Breast epithelium (tissue), 4 donors: ENCODE measurements at regions of chr16 and their contacts with region 1.

Region 1: DNA sequence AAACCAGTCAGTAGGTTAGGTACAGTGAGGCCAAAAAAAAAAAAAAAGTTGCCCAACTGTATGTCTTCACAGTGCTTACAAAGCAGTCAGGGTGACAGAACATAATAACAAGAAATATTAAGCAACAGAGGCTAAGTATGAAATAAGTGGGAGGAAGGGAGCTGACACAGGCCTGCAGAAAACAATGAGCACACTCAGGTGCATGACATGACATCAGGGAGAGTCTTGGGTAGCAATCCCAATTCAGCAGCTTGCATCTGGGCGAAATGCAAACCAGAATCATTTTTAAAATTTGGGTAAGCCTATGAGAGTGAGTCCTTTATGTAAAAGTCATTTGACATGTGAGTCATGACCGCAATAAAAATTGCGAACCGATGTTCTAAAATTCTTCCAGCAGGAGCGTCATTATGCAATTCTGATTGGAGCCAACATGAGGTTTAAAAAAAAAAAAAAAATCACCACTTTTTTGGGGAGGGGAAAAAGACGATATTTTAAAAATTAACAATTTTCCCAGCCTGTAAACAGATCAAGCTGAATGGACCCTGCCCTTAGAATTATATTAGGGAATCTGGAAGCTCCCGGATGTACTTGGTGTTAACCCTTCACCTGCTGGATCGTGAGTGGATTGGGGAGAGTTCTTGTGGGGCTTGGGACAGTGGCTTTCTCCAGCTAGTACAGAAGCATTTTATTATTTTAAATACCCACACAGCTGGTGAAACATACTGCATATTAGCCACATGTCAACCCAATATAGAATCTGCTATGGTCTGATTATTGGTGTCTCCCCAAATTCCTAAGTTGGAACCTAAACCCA is 127.9 kb downstream of the NPIPB5 start:
- DNase-seq: no peak
- H3K4me3 ChIP-seq: no peak overlapping the region
- H3K27ac ChIP-seq: peak overlapping the region in 1 of 2 donors; percentile 8
- H3K4me1 ChIP-seq: no peaks in the 10 kb centered on the region
- H3K27me3 ChIP-seq: no peaks in the 10 kb centered on the region
- CTCF ChIP-seq: no peak
- POLR2A ChIP-seq: no peak

Region 2: DNA sequence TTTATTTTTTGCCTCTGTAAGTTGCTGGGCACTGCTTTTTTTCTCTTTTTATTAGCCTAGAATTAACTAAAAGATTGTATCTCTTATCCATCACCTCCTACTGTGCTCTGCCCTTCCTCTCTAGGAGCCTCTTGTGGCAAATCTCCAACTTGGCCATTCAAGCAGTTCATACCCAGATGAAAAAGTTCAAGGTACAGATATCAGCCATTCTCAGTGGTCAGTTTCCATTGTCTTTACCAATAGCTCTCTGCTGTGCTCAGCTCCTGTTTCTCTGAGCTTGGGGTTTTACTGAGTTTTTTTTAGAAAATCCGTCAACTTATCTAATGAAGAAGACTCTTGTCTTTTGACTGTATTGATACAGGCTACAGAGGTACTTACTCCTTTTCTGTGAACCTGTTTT is 615.1 kb before region 1 on chr16:
- intact Hi-C with region 1: loop called (anchors 5 kb)
- DNase-seq: no peak
- H3K4me3 ChIP-seq: no peak overlapping the region
- H3K27ac ChIP-seq: no peak overlapping the region
- H3K4me1 ChIP-seq: peaks cover 0 to 6% of the 10 kb centered on the region in 2 donors
- H3K27me3 ChIP-seq: no peaks in the 10 kb centered on the region
- CTCF ChIP-seq: no peak
- POLR2A ChIP-seq: no peak

Region 3: GRCh38 chr16:22675745-22676540 is 37.3 kb after region 1 on chr16:
- intact Hi-C with region 1: loop called (anchors 1 kb)
- DNase-seq: no peak
- H3K4me3 ChIP-seq: no peak overlapping the region
- H3K27ac ChIP-seq: no peak overlapping the region
- H3K4me1 ChIP-seq: no peaks in the 10 kb centered on the region
- H3K27me3 ChIP-seq: no peaks in the 10 kb centered on the region
- CTCF ChIP-seq: no peak
- POLR2A ChIP-seq: no peak